ENCODE measurements at regions of chr3 and their contacts with region 1.

Region 1: GRCh38 chr3:121467085-121467484 is 78.7 kb downstream of the POLQ start:
- DNase-seq: no peak
- H3K4me3 ChIP-seq: no peak overlapping the region
- H3K27ac ChIP-seq: no peak overlapping the region
- H3K4me1 ChIP-seq: no peaks in the 10 kb centered on the region
- H3K27me3 ChIP-seq: no peaks in the 10 kb centered on the region
- CTCF ChIP-seq: no peak

Region 2: GRCh38 chr3:121517953-121518655 is 51.0 kb after region 1 on chr3:
- CTCF ChIA-PET with region 1: no interaction called
- dilution Hi-C with region 1: loop called (anchors 5 kb)
- in situ Hi-C with region 1: no loop called
- intact Hi-C with region 1: no loop called
- DNase-seq: no peak
- H3K4me3 ChIP-seq: no peak overlapping the region
- H3K27ac ChIP-seq: no peak overlapping the region
- H3K4me1 ChIP-seq: no peaks in the 10 kb centered on the region
- H3K27me3 ChIP-seq: no peaks in the 10 kb centered on the region
- CTCF ChIP-seq: no peak

Region 3: GRCh38 chr3:121545574-121546455 is 78.7 kb after region 1 on chr3 and contains the start of gene POLQ:
- CTCF ChIA-PET with region 1: no interaction called
- dilution Hi-C with region 1: no loop called
- in situ Hi-C with region 1: no loop called
- intact Hi-C with region 1: no loop called
- DNase-seq: peak; percentile 93
- H3K4me3 ChIP-seq: peak within 1 kb of the TSS; percentile 69 to 86 (median 71)
- H3K27ac ChIP-seq: peak within 1 kb of the TSS; percentile 66
- H3K4me1 ChIP-seq: peaks cover 16% of the 10 kb centered on the region
- H3K27me3 ChIP-seq: no peaks in the 10 kb centered on the region
- CTCF ChIP-seq: no peak
- total RNA-seq, gene POLQ: 1.0 to 8.4 TPM

Measured in mammary epithelial cell (primary cell).